Endothelial cell of umbilical vein (primary cell): ENCODE measurements at regions of chrX and their contacts with region 1.

Region 1: DNA sequence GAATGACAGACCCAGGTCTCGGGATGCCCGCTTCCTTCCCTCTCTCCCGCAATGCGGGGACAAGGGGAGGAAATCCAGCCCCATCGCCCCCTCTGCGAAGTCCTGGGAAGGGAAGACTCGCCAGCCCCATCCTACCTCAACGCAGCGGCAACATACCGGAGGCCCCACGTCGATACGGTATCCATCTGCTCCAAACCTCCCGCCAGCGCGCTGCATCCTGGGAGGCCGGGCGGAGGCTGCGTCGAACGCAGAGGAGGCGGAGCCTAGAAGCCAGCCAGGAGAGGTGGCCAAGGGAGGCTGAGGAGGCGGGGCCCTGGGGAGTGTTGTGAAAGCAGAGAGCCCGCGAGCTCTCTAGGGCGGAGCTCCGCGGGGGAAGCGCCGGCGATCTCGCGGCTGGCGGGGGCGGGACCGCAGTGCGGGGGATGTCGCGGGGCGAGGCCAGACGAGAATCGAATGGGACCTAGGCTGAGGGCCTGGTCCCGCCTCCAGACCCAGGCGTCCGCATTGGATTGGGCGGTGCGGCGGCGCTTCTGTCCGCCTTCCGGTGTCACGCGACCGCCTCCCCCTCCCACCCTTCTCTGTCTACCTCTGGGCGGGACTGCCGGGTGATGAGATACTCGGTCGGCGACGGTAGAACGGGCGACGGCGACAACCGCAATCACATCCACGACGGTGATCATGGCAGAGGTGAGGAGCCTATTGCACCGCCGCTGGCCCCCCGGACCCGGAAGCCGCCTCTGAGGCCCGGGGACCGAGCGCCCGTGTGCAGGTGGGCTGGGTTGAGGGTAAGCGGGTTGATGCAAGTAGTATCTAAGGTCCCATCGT is at the starts of genes FANCB and MOSPD2:
- DNase-seq: peak; percentile 95
- H3K4me3 ChIP-seq: peak within 1 kb of the TSS; percentile 70 to 94 (median 92)
- H3K27ac ChIP-seq: peak within 1 kb of the TSS; percentile 69
- H3K4me1 ChIP-seq: peaks cover 9% of the 10 kb centered on the region
- H3K27me3 ChIP-seq: no peaks in the 10 kb centered on the region
- CTCF ChIP-seq: no peak
- POLR2A ChIP-seq: peak; percentile 26
- total RNA-seq, gene FANCB: 6.6 and 7.9 TPM in 2 replicates
- total RNA-seq, gene MOSPD2: 13.3 and 14.9 TPM in 2 replicates

Region 2: GRCh38 chrX:14209034-14209433 is 664.0 kb before region 1 on chrX:
- CTCF ChIA-PET with region 1: no interaction called
- POLR2A ChIA-PET with region 1: no interaction called
- dilution Hi-C with region 1: no loop called
- intact Hi-C with region 1: no loop called
- DNase-seq: no peak
- H3K4me3 ChIP-seq: no peak overlapping the region
- H3K27ac ChIP-seq: no peak overlapping the region
- H3K4me1 ChIP-seq: no peaks in the 10 kb centered on the region
- H3K27me3 ChIP-seq: no peaks in the 10 kb centered on the region
- CTCF ChIP-seq: no peak
- POLR2A ChIP-seq: no peak

Region 3: GRCh38 chrX:14757761-14758491 is 115.1 kb before region 1 on chrX:
- CTCF ChIA-PET with region 1: no interaction called
- POLR2A ChIA-PET with region 1: no interaction called
- dilution Hi-C with region 1: no loop called
- intact Hi-C with region 1: no loop called
- DNase-seq: no peak
- H3K4me3 ChIP-seq: no peak overlapping the region
- H3K27ac ChIP-seq: no peak overlapping the region
- H3K4me1 ChIP-seq: no peaks in the 10 kb centered on the region
- H3K27me3 ChIP-seq: no peaks in the 10 kb centered on the region
- CTCF ChIP-seq: no peak
- POLR2A ChIP-seq: no peak

Region 4: GRCh38 chrX:14896273-14896672 is 23.2 kb after region 1 on chrX:
- CTCF ChIA-PET with region 1: no interaction called
- POLR2A ChIA-PET with region 1: no interaction called
- dilution Hi-C with region 1: no loop called
- intact Hi-C with region 1: loop called (anchors 2 kb)
- DNase-seq: no peak
- H3K4me3 ChIP-seq: no peak overlapping the region
- H3K27ac ChIP-seq: no peak overlapping the region
- H3K4me1 ChIP-seq: peaks cover 9% of the 10 kb centered on the region
- H3K27me3 ChIP-seq: no peaks in the 10 kb centered on the region
- CTCF ChIP-seq: no peak
- POLR2A ChIP-seq: no peak

Region 5: DNA sequence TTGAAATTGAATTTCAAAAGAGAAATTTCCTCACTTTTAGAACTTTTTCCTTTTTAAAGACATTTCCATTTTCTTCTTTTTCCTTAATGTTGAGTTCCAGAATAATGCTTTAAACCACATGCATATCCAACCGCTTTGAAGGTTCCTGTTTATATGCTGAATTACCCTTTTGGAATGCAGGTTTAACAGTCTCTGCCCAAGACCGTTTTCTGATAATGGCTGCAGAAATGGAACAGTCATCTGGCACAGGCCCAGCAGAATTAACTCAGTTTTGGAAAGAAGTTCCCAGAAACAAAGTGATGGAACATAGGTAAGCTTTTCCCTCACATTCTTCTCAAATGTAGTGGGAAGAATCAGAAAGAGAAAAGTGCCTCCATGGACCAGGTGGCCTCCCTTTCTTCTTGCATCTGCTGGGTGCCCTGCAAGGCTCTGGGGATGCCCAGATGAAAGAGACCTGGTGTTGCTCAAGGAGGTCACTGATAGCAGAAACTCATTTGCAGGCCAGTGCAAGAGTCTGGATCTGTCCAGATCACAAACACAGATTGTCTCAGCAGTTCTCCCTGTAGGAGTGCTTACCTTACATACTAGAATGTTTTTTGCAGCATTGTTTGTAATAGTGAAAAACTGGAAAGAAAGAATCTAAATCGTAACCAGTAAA is 43.1 kb after region 1 on chrX:
- CTCF ChIA-PET with region 1: no interaction called
- POLR2A ChIA-PET with region 1: no interaction called
- dilution Hi-C with region 1: no loop called
- intact Hi-C with region 1: loop called (anchors 1 kb)
- DNase-seq: peak; percentile 17
- H3K4me3 ChIP-seq: no peak overlapping the region
- H3K27ac ChIP-seq: no peak overlapping the region
- H3K4me1 ChIP-seq: peaks cover 6% of the 10 kb centered on the region
- H3K27me3 ChIP-seq: no peaks in the 10 kb centered on the region
- CTCF ChIP-seq: no peak
- POLR2A ChIP-seq: no peak

Region 6: DNA sequence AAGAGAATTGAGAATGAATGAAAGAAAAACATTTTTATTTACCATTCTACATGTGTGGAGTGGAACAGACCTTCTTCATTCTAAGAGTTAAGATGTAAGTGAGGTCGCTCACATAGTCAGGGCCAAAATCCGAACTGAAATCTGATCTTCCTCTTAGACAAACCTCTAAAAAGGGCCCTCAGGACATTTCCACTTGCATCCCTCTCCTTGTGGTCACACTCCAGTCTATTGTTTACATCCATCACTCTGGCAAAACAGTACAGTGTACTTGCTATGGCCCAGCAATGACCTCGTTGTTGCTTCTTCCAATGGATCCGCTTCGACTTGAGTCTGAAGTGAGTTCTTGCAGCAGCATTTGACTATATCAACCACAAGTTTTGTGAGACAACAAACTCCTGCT is 54.3 kb after region 1 on chrX:
- CTCF ChIA-PET with region 1: no interaction called
- POLR2A ChIA-PET with region 1: no interaction called
- dilution Hi-C with region 1: no loop called
- intact Hi-C with region 1: loop called (anchors 5 kb)
- DNase-seq: no peak
- H3K4me3 ChIP-seq: no peak overlapping the region
- H3K27ac ChIP-seq: no peak overlapping the region
- H3K4me1 ChIP-seq: peaks cover 12% of the 10 kb centered on the region
- H3K27me3 ChIP-seq: no peaks in the 10 kb centered on the region
- CTCF ChIP-seq: no peak
- POLR2A ChIP-seq: no peak

Region 7: GRCh38 chrX:14963447-14964236 is 90.6 kb after region 1 on chrX:
- CTCF ChIA-PET with region 1: no interaction called
- POLR2A ChIA-PET with region 1: no interaction called
- dilution Hi-C with region 1: no loop called
- intact Hi-C with region 1: loop called (anchors 2 kb)
- DNase-seq: peak; percentile 29
- H3K4me3 ChIP-seq: no peak overlapping the region
- H3K27ac ChIP-seq: peak overlapping the region; percentile 41
- H3K4me1 ChIP-seq: peaks cover 14% of the 10 kb centered on the region
- H3K27me3 ChIP-seq: no peaks in the 10 kb centered on the region
- CTCF ChIP-seq: no peak
- POLR2A ChIP-seq: no peak